ENCODE measurements at regions of chr11 and their contacts with region 1.

Region 1: GRCh38 chr11:13745165-13745564 is 76.7 kb downstream of the FAR1 start:
- DNase-seq: no peak
- H3K4me3 ChIP-seq: no peak overlapping the region
- H3K27ac ChIP-seq: no peak overlapping the region
- H3K4me1 ChIP-seq: no peaks in the 10 kb centered on the region
- H3K27me3 ChIP-seq: no peaks in the 10 kb centered on the region
- CTCF ChIP-seq: no peak
- POLR2A ChIP-seq: no peak

Region 2: GRCh38 chr11:13728076-13728475 is 17.1 kb before region 1 on chr11:
- intact Hi-C with region 1: loop called (anchors 1 kb)
- DNase-seq: no peak
- H3K4me3 ChIP-seq: no peak overlapping the region
- H3K27ac ChIP-seq: no peak overlapping the region
- H3K4me1 ChIP-seq: no peaks in the 10 kb centered on the region
- H3K27me3 ChIP-seq: no peaks in the 10 kb centered on the region
- CTCF ChIP-seq: no peak
- POLR2A ChIP-seq: no peak